ENCODE measurements at regions of chr13 and their contacts with region 1.

Region 1: GRCh38 chr13:75537401-75538365 is at the start of gene COMMD6:
- H3K4me3 Mint-ChIP-seq: peak within 1 kb of the TSS; percentile 99
- H3K27ac Mint-ChIP-seq: peak within 1 kb of the TSS; percentile 96
- H3K4me1 Mint-ChIP-seq: peaks cover 34% of the 10 kb centered on the region
- H3K27me3 Mint-ChIP-seq: no peaks in the 10 kb centered on the region

Region 2: GRCh38 chr13:75514080-75514995 is 23.3 kb before region 1 on chr13:
- intact Hi-C with region 1: loop called (anchors 2 kb)
- H3K4me3 Mint-ChIP-seq: no peak overlapping the region
- H3K27ac Mint-ChIP-seq: no peak overlapping the region
- H3K4me1 Mint-ChIP-seq: peaks cover 23% of the 10 kb centered on the region
- H3K27me3 Mint-ChIP-seq: peaks cover 3% of the 10 kb centered on the region

Measured in dendritic cell treated with granulocyte-macrophage colony-stimulating factor and Interleukin-4, amounts not matched to agents 40 ng/mL and 50 ng/mL, for 4 days (primary cell).